Activated T-helper 2 cell treated with anti-CD3 and anti-CD28 coated beads, Interferon-gamma antibody, Interleukin-2, Interleukin-4, amounts not matched to agents 10 μg/mL and 5 μg/mL and 100 μg/mL, durations not matched to agents 14 hours and 24 hours and 36 hours (primary cell): ENCODE measurements at regions of chr13 and their contacts with region 1.

Region 1: GRCh38 chr13:100392709-100393641 is 195.6 kb downstream of the GGACT start:
- DNase-seq: peak; percentile 41
- H3K4me3 Mint-ChIP-seq: peak overlapping the region; percentile 11
- H3K27ac Mint-ChIP-seq: peak overlapping the region; percentile 67
- H3K4me1 Mint-ChIP-seq: peaks cover 30% of the 10 kb centered on the region
- H3K27me3 Mint-ChIP-seq: no peaks in the 10 kb centered on the region

Region 2: GRCh38 chr13:99647596-99647985 is 745.4 kb before region 1 on chr13:
- intact Hi-C with region 1: no loop called
- DNase-seq: no peak
- H3K4me3 Mint-ChIP-seq: no peak overlapping the region
- H3K27ac Mint-ChIP-seq: no peak overlapping the region
- H3K4me1 Mint-ChIP-seq: no peaks in the 10 kb centered on the region
- H3K27me3 Mint-ChIP-seq: peaks cover 25% of the 10 kb centered on the region

Region 3: GRCh38 chr13:100088644-100089464 is 304.1 kb before region 1 on chr13 and contains the start of gene PCCA:
- intact Hi-C with region 1: loop called (anchors 5 kb)
- DNase-seq: peak; percentile 69
- H3K4me3 Mint-ChIP-seq: peak within 1 kb of the TSS; percentile 91
- H3K27ac Mint-ChIP-seq: peak within 1 kb of the TSS; percentile 68
- H3K4me1 Mint-ChIP-seq: peaks cover 16% of the 10 kb centered on the region
- H3K27me3 Mint-ChIP-seq: no peaks in the 10 kb centered on the region
- total RNA-seq, gene PCCA: 6.7 and 7.1 TPM in 2 replicates

Region 4: GRCh38 chr13:100363874-100364273 is 29.1 kb before region 1 on chr13:
- intact Hi-C with region 1: loop called (anchors 1 kb)
- DNase-seq: no peak
- H3K4me3 Mint-ChIP-seq: no peak overlapping the region
- H3K27ac Mint-ChIP-seq: no peak overlapping the region
- H3K4me1 Mint-ChIP-seq: peaks cover 14% of the 10 kb centered on the region
- H3K27me3 Mint-ChIP-seq: no peaks in the 10 kb centered on the region

Region 5: GRCh38 chr13:100470866-100471505 is 78.0 kb after region 1 on chr13:
- intact Hi-C with region 1: loop called (anchors 2 kb)
- DNase-seq: no peak
- H3K4me3 Mint-ChIP-seq: no peak overlapping the region
- H3K27ac Mint-ChIP-seq: no peak overlapping the region
- H3K4me1 Mint-ChIP-seq: peaks cover 9% of the 10 kb centered on the region
- H3K27me3 Mint-ChIP-seq: peaks cover 4% of the 10 kb centered on the region